ENCODE measurements at regions of chr20 and their contacts with region 1.

Region 1: GRCh38 chr20:20489054-20489453 is 121.2 kb downstream of the INSM1 start:
- DNase-seq: no peak
- H3K4me3 Mint-ChIP-seq: peak overlapping the region; percentile 69
- H3K27ac Mint-ChIP-seq: peak overlapping the region; percentile 85
- H3K4me1 Mint-ChIP-seq: peaks cover 65% of the 10 kb centered on the region
- H3K27me3 Mint-ChIP-seq: no peaks in the 10 kb centered on the region

Region 2: GRCh38 chr20:19947611-19948264 is 541.3 kb before region 1 on chr20:
- CTCF ChIA-PET with region 1: no interaction called
- POLR2A ChIA-PET with region 1: no interaction called
- intact Hi-C with region 1: loop called (anchors 10 kb)
- DNase-seq: peak; percentile 28
- H3K4me3 Mint-ChIP-seq: no peak overlapping the region
- H3K27ac Mint-ChIP-seq: no peak overlapping the region
- H3K4me1 Mint-ChIP-seq: peaks cover 30% of the 10 kb centered on the region
- H3K27me3 Mint-ChIP-seq: peaks cover 2% of the 10 kb centered on the region

Region 3: GRCh38 chr20:20407891-20408805 is 80.9 kb before region 1 on chr20:
- CTCF ChIA-PET with region 1: interaction called, 4 read pairs
- POLR2A ChIA-PET with region 1: interaction called, 7 read pairs
- intact Hi-C with region 1: loop called (anchors 1 kb)
- DNase-seq: no peak
- H3K4me3 Mint-ChIP-seq: no peak overlapping the region
- H3K27ac Mint-ChIP-seq: no peak overlapping the region
- H3K4me1 Mint-ChIP-seq: peaks cover 25% of the 10 kb centered on the region
- H3K27me3 Mint-ChIP-seq: no peaks in the 10 kb centered on the region

Region 4: GRCh38 chr20:20435453-20435852 is 53.6 kb before region 1 on chr20:
- CTCF ChIA-PET with region 1: no interaction called
- POLR2A ChIA-PET with region 1: no interaction called
- intact Hi-C with region 1: no loop called
- DNase-seq: no peak
- H3K4me3 Mint-ChIP-seq: no peak overlapping the region
- H3K27ac Mint-ChIP-seq: no peak overlapping the region
- H3K4me1 Mint-ChIP-seq: no peaks in the 10 kb centered on the region
- H3K27me3 Mint-ChIP-seq: no peaks in the 10 kb centered on the region

Region 5: GRCh38 chr20:20452254-20452676 is 36.8 kb before region 1 on chr20:
- CTCF ChIA-PET with region 1: interaction called, 9 read pairs
- POLR2A ChIA-PET with region 1: interaction called, 7 read pairs
- intact Hi-C with region 1: loop called (anchors 1 kb)
- DNase-seq: peak; percentile 87
- H3K4me3 Mint-ChIP-seq: peak overlapping the region; percentile 72
- H3K27ac Mint-ChIP-seq: peak overlapping the region; percentile 71
- H3K4me1 Mint-ChIP-seq: peaks cover 49% of the 10 kb centered on the region
- H3K27me3 Mint-ChIP-seq: no peaks in the 10 kb centered on the region

Region 6: DNA sequence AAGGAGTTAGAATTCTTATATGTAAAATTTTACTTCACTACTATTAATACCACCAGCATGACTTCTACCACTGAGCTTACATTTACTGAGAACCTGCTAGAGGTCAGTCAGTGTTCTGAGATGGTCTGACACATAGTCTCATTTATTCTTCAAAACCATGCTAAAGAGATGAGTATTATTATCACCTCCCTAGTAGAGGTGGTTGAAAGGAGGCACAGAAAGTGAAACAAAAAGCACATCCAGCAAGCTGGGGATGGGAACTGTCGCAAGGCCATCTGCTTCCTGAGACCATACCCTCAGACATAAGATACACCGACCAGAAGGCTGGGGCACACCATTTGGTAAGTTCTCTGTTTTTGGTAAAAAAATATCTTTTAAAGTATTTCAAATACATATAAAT is 16.5 kb after region 1 on chr20:
- CTCF ChIA-PET with region 1: interaction called, 4 read pairs
- POLR2A ChIA-PET with region 1: interaction called, 4 read pairs
- intact Hi-C with region 1: loop called (anchors 2 kb)
- DNase-seq: no peak
- H3K4me3 Mint-ChIP-seq: no peak overlapping the region
- H3K27ac Mint-ChIP-seq: no peak overlapping the region
- H3K4me1 Mint-ChIP-seq: peaks cover 28% of the 10 kb centered on the region
- H3K27me3 Mint-ChIP-seq: no peaks in the 10 kb centered on the region

Region 7: DNA sequence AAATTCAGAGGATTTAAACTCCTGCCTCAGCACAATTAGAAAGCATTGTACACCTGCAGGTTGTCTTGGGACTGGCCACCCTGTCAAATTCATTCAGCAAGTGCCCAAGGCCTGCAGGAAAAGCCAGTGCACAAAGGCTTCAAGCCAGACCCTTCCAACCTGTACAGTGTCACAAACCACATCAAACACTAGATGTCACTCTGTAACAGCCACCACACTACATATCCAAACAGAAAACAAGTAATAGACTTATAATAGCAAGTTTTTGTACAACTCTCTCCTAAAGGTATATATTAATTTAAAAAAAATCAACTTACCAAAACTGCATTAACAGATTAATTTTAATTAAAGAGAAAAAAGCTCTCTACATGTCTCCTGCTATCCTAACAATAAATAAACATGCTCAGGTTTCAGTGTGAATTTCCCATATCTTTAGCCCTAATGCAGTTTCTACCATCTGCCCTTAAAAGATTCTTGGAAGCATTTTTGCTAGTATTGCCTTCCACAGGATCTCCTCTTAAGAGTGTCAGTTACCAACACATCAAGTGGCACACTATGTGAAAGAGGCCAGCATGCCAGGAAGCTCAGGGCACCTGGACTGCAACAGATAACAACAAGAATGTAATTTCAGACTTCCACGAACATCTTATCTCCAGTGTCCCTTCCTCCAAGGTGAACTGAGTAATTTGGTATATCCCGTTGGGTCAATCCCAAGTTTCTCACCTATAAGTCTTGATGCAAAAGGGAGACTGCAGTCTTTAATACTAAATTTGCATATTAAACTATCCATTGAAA is 175.9 kb after region 1 on chr20:
- CTCF ChIA-PET with region 1: no interaction called
- POLR2A ChIA-PET with region 1: no interaction called
- intact Hi-C with region 1: no loop called
- DNase-seq: no peak
- H3K4me3 Mint-ChIP-seq: no peak overlapping the region
- H3K27ac Mint-ChIP-seq: no peak overlapping the region
- H3K4me1 Mint-ChIP-seq: peaks cover 6% of the 10 kb centered on the region
- H3K27me3 Mint-ChIP-seq: no peaks in the 10 kb centered on the region

Region 8: DNA sequence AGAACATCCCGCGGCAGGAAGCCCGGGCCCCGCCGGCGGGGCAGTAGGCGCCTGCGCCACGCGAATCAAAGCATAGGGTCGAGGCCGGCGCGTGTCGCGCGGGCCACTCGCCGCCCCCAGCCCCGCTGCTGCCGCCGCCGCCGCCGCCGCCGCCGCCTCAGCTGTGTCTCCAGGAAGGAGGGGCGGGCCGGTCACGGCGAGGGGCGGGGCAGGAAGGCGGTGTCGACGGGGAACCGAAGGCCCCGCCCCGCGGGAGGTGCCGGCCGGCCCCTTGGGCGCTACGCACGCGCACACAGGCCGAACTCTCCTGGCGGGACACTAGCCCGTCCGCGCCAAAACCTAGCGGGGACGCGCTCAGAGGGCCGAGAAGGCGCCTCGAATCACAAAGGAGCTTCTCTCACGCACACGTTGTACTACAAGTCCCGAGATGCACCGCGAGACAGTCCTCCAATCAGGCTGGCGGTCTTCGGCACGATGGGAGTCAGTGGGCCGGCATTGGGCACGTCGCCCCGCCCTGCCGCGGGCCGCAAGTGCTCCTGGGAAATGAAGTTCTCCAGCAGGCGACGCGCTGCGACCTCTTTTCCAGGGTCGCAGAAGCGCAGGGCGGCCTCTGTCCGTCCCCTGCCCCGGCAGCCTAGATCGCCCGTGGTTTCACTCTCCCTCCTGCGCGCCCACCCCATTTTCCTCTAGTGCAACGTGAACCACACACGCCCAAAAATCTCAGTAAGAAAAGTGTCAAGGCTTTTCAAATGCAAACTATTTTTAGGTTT is 223.6 kb after region 1 on chr20 and contains the start of gene RALGAPA2:
- CTCF ChIA-PET with region 1: no interaction called
- POLR2A ChIA-PET with region 1: no interaction called
- intact Hi-C with region 1: loop called (anchors 5 kb)
- DNase-seq: peak; percentile 95
- H3K4me3 Mint-ChIP-seq: peak within 1 kb of the TSS; percentile 76
- H3K27ac Mint-ChIP-seq: peak within 1 kb of the TSS; percentile 94
- H3K4me1 Mint-ChIP-seq: peaks cover 25% of the 10 kb centered on the region
- H3K27me3 Mint-ChIP-seq: peaks cover 2% of the 10 kb centered on the region
- total RNA-seq, gene RALGAPA2: 15.9 to 16.6 TPM

Measured in activated CD4-positive, alpha-beta memory T cell treated with anti-CD3 and anti-CD28 coated beads for 36 hours (primary cell).